Heart left ventricle (tissue), 16 donors: ENCODE measurements at regions of chr16 and their contacts with region 1.

Region 1: DNA sequence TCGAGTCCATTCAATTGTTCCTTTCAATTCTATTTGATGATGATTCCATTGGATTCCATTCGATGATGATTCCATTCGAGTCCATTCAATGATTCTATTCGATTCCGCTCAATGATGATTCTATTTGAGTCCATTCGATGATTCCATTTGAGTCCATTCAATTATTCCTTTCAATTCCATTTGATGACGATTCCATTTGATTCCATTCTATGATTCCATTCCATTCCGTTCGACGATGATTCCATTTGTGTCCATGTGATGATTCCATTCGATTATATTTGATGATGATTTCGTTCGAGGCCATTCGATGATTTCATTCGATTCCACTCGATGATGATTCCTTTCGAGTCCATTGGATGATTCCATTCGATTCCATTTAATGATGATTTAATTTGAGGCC is 1206.2 kb downstream of the TP53TG3F start:
- DNase-seq: no peak
- ATAC-seq: no peak
- H3K4me3 ChIP-seq: no peak overlapping the region
- H3K27ac ChIP-seq: no peak overlapping the region
- H3K4me1 ChIP-seq: no peaks in the 10 kb centered on the region
- H3K27me3 ChIP-seq: no peaks in the 10 kb centered on the region
- CTCF ChIP-seq: no peak
- POLR2A ChIP-seq: no peak

Region 2: DNA sequence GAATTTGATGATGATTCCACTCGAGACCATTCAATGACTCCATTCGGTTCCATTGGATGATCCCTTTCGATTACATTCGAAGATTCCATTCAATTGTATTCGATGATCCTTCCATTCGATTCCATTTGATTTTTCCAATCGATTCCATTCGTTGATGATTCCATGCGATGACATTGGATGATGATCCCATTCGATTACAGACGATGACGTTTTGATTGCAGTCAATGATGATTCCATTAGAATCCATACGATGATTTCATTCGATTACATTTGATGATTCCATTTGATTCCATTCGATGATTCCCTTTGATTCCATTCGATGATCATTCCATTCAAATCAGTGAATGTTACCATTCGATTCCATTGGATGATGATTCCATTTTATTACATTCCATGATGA is 58.0 kb after region 1 on chr16:
- intact Hi-C with region 1: loop called in 1 of 10 experiments (anchors 10 kb)
- DNase-seq: no peak
- ATAC-seq: no peak
- H3K4me3 ChIP-seq: no peak overlapping the region
- H3K27ac ChIP-seq: no peak overlapping the region
- H3K4me1 ChIP-seq: no peaks in the 10 kb centered on the region
- H3K27me3 ChIP-seq: no peaks in the 10 kb centered on the region
- CTCF ChIP-seq: no peak
- POLR2A ChIP-seq: no peak

Region 3: GRCh38 chr16:34743103-34743502 is 77.5 kb after region 1 on chr16:
- intact Hi-C with region 1: no loop called
- DNase-seq: no peak
- ATAC-seq: no peak
- H3K4me3 ChIP-seq: no peak overlapping the region
- H3K27ac ChIP-seq: no peak overlapping the region
- H3K4me1 ChIP-seq: no peaks in the 10 kb centered on the region
- H3K27me3 ChIP-seq: no peaks in the 10 kb centered on the region
- CTCF ChIP-seq: no peak
- POLR2A ChIP-seq: no peak